G401 (cell line): ENCODE measurements at regions of chr4 and their contacts with region 1.

Region 1: GRCh38 chr4:165131247-165131832 is 18.7 kb upstream of the TMEM192 start:
- DNase-seq: peak; percentile 77

Region 2: GRCh38 chr4:165079476-165079875 is 51.9 kb before region 1 on chr4:
- in situ Hi-C with region 1: no loop called
- DNase-seq: peak; percentile 72

Region 3: GRCh38 chr4:165096776-165097175 is 34.6 kb before region 1 on chr4:
- in situ Hi-C with region 1: no loop called
- DNase-seq: peak; percentile 21

Region 4: DNA sequence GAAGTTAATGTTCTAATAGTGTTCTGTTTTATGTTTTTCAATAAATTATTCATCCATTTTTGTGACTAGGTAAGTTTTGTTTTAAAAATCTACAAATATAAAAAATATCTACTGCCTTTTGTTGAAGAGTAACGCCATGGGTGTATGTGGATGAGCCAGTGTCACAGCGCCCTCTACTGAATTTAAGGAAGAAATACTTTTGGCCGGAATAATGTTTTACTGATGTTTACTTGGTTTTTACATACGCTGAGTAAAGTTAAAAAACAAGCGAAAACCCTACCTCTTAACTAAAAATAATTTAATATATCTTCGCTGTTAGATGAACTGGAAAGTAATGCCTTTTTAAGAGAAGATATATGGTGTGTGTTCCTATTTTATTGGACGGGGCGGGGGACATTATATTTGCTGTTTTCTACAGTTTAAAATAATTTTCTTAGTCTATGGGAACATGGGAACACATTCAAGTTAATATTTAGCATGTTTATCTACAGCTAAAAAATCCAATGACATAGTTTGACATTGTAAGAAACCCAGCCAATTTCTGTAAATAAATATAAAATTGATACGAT is 333.6 kb after region 1 on chr4:
- in situ Hi-C with region 1: loop called (anchors 10 kb)
- DNase-seq: peak; percentile 80